Right lobe of liver (tissue), 6 donors: ENCODE measurements at regions of chr5 and their contacts with region 1.

Region 1: GRCh38 chr5:116574367-116575325 is at the start of gene SEMA6A:
- DNase-seq: peak; percentile 89 to 91 (median 91)
- ATAC-seq: peak; percentile 84 to 91 (median 90)
- H3K4me3 ChIP-seq: peak within 1 kb of the TSS; percentile 42 to 64 (median 58)
- H3K27ac ChIP-seq: peak within 1 kb of the TSS; percentile 38 to 73 (median 53)
- H3K4me1 ChIP-seq: peaks cover 0 to 35% (median 9%) of the 10 kb centered on the region in 4 donors
- H3K27me3 ChIP-seq: peaks cover 0 to 31% of the 10 kb centered on the region in 2 donors
- CTCF ChIP-seq: peak in 2 of 4 donors; percentile 4 to 15
- POLR2A ChIP-seq: peak; percentile 62
- total RNA-seq, gene SEMA6A: 4.5 to 12.0 (median 8.4) TPM

Region 2: DNA sequence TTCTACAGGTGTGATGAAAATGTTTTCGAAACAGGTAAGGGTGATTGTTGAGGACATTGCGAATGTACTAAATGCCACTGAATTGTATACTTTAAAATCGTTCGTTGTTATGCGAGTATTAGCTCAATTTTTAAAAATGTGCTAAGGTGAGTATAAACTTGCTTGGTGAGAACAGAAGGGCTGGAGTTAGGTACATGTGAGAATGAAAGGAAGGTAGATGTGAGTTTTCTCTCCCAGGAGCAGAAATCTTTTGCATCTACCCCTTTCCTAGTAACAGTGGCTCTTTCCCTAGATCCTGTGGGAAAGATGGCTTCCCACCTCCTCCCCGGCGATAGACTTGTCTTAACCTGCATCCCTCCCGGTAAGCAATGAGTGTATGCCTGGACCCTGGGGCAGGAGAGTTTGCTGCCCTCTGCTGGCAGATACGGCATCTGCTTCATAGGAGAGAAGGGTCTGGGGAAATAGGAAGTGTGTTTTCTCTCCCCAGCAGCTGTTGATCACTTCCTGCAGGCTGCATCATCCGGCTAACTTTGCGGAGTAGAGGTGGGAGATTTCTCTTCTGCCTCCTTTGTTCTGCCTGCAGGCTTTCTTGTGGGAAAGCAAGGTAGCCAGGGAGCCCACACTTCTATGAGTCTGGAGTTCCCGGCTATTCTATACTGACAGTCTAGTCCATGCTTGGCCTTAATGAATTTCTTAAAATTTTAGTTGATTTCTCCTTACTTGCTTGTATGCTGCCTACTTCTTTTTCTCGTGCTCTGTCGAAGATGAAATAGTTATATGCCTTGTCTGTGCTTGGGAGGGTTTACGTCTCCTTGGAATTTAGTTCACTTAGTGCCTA is 373.3 kb after region 1 on chr5:
- intact Hi-C with region 1: loop called in 1 of 2 experiments (anchors 10 kb)
- DNase-seq: peak; percentile 71 to 76 (median 71)
- ATAC-seq: peak; percentile 96 to 99 (median 98)
- H3K4me3 ChIP-seq: no peak overlapping the region
- H3K27ac ChIP-seq: no peak overlapping the region
- H3K4me1 ChIP-seq: no peaks in the 10 kb centered on the region
- H3K27me3 ChIP-seq: no peaks in the 10 kb centered on the region
- CTCF ChIP-seq: peak; percentile 63 to 88 (median 78)
- POLR2A ChIP-seq: no peak